ENCODE measurements at regions of chr16 and their contacts with region 1.

Region 1: DNA sequence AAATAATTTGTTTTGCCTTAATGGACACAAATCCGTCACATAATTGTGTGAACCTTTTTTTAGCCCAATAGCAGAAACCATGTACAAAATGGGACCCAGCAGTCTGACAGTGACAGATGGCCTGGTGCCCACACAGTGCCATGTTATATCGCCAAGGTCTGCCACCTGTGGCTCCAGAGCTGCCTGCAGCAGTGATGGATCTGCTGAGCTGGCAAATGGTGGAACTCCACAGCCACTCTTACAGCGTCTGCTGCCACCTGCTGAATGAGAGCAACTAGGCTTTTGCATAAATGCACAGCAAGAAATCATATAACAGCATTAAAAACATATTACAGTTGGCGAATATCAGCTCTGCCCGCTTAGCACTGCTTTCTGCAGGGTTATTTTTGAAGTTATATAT is 59.4 kb downstream of the NUP93 start:
- DNase-seq: peak; percentile 56
- ATAC-seq: peak; percentile 67
- H3K4me3 ChIP-seq: no peak overlapping the region
- H3K27ac ChIP-seq: no peak overlapping the region
- H3K4me1 ChIP-seq: 0 out of 2 replicates have a peak, but pooled peaks cover 2% of the 10 kb centered on the region
- H3K27me3 ChIP-seq: no peaks in the 10 kb centered on the region
- CTCF ChIP-seq: peak; percentile 57

Region 2: GRCh38 chr16:56513972-56514371 is 275.4 kb before region 1 on chr16:
- CTCF ChIA-PET with region 1: no interaction called
- POLR2A ChIA-PET with region 1: no interaction called
- intact Hi-C with region 1: loop called (anchors 1 kb)
- DNase-seq: peak; percentile 64
- ATAC-seq: peak; percentile 68
- H3K4me3 ChIP-seq: no peak overlapping the region
- H3K27ac ChIP-seq: no peak overlapping the region
- H3K4me1 ChIP-seq: peaks cover 32% of the 10 kb centered on the region
- H3K27me3 ChIP-seq: no peaks in the 10 kb centered on the region
- CTCF ChIP-seq: peak; percentile 76

Region 3: GRCh38 chr16:56608043-56608875 is 181.1 kb before region 1 on chr16 and contains the start of gene MT2A:
- CTCF ChIA-PET with region 1: interaction called, 4 read pairs
- POLR2A ChIA-PET with region 1: no interaction called
- intact Hi-C with region 1: loop called (anchors 5 kb)
- DNase-seq: peak; percentile 93
- ATAC-seq: peak; percentile 48
- H3K4me3 ChIP-seq: peak within 1 kb of the TSS; percentile 90
- H3K27ac ChIP-seq: peak within 1 kb of the TSS; percentile 82
- H3K4me1 ChIP-seq: peaks cover 71% of the 10 kb centered on the region
- H3K27me3 ChIP-seq: no peaks in the 10 kb centered on the region
- CTCF ChIP-seq: no peak
- total RNA-seq, gene MT2A: 683 and 758 TPM in 2 replicates

Region 4: GRCh38 chr16:56643080-56643778 is 146.1 kb before region 1 on chr16:
- CTCF ChIA-PET with region 1: no interaction called
- POLR2A ChIA-PET with region 1: no interaction called
- intact Hi-C with region 1: no loop called
- DNase-seq: peak; percentile 53
- ATAC-seq: peak; percentile 99
- H3K4me3 ChIP-seq: no peak overlapping the region
- H3K27ac ChIP-seq: no peak overlapping the region
- H3K4me1 ChIP-seq: peaks cover 10% of the 10 kb centered on the region
- H3K27me3 ChIP-seq: no peaks in the 10 kb centered on the region
- CTCF ChIP-seq: no peak; the same call in 1 of the 2 replicates

Region 5: GRCh38 chr16:56729735-56730662 is 59.4 kb before region 1 on chr16 and contains the start of gene NUP93:
- CTCF ChIA-PET with region 1: no interaction called
- POLR2A ChIA-PET with region 1: no interaction called
- intact Hi-C with region 1: loop called (anchors 2 kb)
- DNase-seq: peak; percentile 85
- ATAC-seq: peak; percentile 95
- H3K4me3 ChIP-seq: peak within 1 kb of the TSS; percentile 97
- H3K27ac ChIP-seq: peak within 1 kb of the TSS; percentile 36; the same call in 1 of the 2 replicates
- H3K4me1 ChIP-seq: peaks cover 22% of the 10 kb centered on the region
- H3K27me3 ChIP-seq: no peaks in the 10 kb centered on the region
- CTCF ChIP-seq: 0 out of 2 replicates have a peak, but pooled peaks have one; percentile 28
- total RNA-seq, gene NUP93: 94.5 and 98.6 TPM in 2 replicates

Region 6: GRCh38 chr16:56851671-56852400 is 62.5 kb after region 1 on chr16:
- CTCF ChIA-PET with region 1: interaction called, 4 read pairs
- POLR2A ChIA-PET with region 1: no interaction called
- intact Hi-C with region 1: loop called (anchors 1 kb)
- DNase-seq: no peak
- ATAC-seq: no peak
- H3K4me3 ChIP-seq: no peak overlapping the region
- H3K27ac ChIP-seq: no peak overlapping the region
- H3K4me1 ChIP-seq: peaks cover 36% of the 10 kb centered on the region
- H3K27me3 ChIP-seq: no peaks in the 10 kb centered on the region
- CTCF ChIP-seq: peak; percentile 49

Region 7: GRCh38 chr16:56888806-56889205 is 99.4 kb after region 1 on chr16:
- CTCF ChIA-PET with region 1: no interaction called
- POLR2A ChIA-PET with region 1: no interaction called
- intact Hi-C with region 1: no loop called
- DNase-seq: no peak
- ATAC-seq: no peak
- H3K4me3 ChIP-seq: no peak overlapping the region
- H3K27ac ChIP-seq: no peak overlapping the region
- H3K4me1 ChIP-seq: no peaks in the 10 kb centered on the region
- H3K27me3 ChIP-seq: no peaks in the 10 kb centered on the region
- CTCF ChIP-seq: no peak

Region 8: GRCh38 chr16:56944954-56945839 is 155.8 kb after region 1 on chr16:
- CTCF ChIA-PET with region 1: no interaction called
- POLR2A ChIA-PET with region 1: no interaction called
- intact Hi-C with region 1: loop called (anchors 10 kb)
- DNase-seq: peak; percentile 65
- ATAC-seq: peak; percentile 29; the same call in 1 of the 2 replicates
- H3K4me3 ChIP-seq: no peak overlapping the region
- H3K27ac ChIP-seq: peak overlapping the region; percentile 23; the same call in 1 of the 2 replicates
- H3K4me1 ChIP-seq: peaks cover 17% of the 10 kb centered on the region
- H3K27me3 ChIP-seq: no peaks in the 10 kb centered on the region
- CTCF ChIP-seq: no peak

Region 9: DNA sequence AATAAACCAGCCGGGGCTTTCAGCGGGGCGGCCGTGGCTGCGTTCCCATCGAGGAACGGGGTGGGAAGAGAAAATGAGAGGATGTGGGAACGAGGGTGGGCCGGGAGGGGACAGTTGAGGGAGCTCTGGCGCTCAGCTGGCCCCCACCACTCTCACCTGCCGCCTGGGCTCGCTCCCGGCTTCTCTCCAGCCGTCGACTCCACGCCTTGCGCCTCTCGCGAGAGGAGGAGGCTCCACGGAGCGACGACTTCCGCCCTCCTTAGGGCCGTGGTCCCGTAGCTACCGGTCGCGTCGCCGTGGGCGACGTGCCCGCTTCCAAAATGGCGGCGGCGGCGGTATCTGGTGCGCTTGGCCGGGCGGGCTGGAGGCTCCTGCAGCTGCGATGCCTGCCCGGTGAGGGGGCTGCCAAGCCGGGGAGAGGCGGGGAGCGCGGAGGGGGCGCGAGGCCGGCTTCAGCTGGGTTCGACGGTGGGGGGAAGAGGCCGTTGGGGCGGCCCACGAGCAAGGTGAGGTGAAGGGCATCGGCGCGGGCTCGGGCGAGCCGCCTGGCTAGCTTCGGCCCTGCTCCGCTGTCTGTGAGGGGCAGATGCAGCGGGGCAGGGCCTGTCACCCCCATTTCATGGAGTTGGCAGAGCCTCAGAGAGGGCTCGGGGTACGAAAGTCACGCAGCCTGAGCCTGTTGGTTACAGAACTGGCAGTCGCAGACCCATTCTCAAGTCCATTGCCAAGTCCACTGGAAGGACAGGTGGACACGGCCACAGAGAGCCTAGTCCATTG is 658.0 kb after region 1 on chr16 and contains the starts of genes CIAPIN1 and COQ9:
- CTCF ChIA-PET with region 1: no interaction called
- POLR2A ChIA-PET with region 1: no interaction called
- intact Hi-C with region 1: no loop called
- DNase-seq: peak; percentile 91
- ATAC-seq: peak; percentile 99
- H3K4me3 ChIP-seq: peak within 1 kb of the TSS; percentile 98
- H3K27ac ChIP-seq: peak within 1 kb of the TSS; percentile 55
- H3K4me1 ChIP-seq: peaks cover 12% of the 10 kb centered on the region
- H3K27me3 ChIP-seq: no peaks in the 10 kb centered on the region
- CTCF ChIP-seq: no peak
- total RNA-seq, gene CIAPIN1: 35.6 and 48.6 TPM in 2 replicates
- total RNA-seq, gene COQ9: 67.0 and 67.4 TPM in 2 replicates

Measured in PC-3 (cell line).